AG04449 (cell line): ENCODE measurements at regions of chr19 and their contacts with region 1.

Region 1: DNA sequence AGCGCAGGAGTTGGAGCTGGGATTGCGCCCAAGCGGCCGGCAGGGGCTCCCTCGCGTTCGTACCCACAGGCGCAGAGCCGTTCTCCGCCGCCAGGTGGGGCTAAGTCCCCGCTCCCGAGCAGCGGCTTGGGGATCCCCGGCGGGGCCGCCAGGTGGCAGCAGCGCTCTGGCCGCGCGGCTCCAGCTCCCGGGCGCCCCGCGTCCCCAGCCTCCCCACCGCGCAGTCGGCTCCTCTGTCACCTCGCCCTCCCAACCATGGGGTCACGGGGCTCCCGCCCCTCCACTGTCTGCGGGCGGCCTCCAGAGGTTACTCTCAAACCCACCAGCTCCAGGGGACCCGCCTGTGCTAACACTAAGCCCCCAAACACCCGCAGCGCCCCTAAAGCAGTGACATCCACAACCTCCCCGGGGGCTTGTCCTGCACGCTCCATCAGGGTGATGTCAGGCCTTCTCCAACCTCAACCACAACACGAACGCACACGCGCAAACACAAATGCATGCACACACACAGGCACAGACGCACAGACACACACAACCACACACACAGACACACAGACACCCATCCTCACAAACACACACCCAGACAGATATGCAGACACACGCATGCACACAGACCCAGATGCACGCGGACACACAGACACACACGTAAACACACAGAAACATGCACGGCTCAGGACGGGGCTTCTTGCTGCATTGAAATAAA is 18.4 kb upstream of the KCTD15 start:
- DNase-seq: no peak
- H3K4me3 ChIP-seq: no peak overlapping the region
- CTCF ChIP-seq: peak; percentile 99

Region 2: DNA sequence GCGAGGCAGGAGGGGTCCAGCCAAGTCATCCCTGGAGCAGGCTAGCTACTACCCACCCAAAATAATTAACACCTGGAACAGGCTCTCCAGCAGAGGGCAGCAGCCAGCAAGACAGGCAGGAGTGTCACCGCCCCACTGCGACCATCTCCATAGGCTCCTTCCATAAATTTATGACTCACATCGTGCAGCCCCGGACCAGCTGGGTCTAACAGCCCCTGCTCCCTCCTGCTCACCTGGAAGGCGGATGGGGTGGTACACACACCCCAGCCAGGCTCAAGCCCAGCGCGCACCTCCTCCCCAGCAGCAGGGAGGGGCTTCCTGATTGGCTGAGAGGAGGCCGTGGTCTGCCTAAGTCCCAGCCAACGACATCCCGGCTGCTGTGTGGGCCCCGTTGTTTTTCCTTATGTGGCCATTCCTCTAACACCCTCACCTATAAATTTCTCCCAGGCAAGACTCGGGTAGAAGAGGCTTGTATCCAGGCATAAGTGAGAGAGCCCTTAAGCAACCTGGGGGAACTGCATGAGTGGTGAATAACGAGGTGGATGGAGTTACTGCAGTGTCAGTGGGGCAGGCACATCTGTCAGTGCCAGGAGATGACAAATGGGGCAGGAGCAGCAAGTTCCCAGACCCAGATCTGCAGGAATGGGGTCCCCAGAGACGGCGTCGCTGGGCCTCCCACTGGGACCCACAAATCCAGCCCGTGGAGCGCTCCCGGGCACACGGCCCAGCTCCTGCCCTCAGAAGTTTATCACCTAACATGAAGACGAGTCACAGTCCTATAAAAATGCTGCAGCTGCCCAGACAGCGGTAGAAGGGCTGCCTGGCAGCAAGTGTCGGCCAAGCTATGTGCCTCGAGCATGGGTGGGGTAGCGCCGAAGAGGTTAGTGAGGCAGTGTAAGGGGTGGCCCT is 361.7 kb before region 1 on chr19:
- CTCF ChIA-PET with region 1: interaction called, 170 read pairs
- POLR2A ChIA-PET with region 1: no interaction called
- DNase-seq: no peak
- H3K4me3 ChIP-seq: peak overlapping the region; percentile 12; the same call in 1 of the 2 replicates
- CTCF ChIP-seq: peak; percentile 74

Region 3: GRCh38 chr19:33720691-33721682 is 57.3 kb before region 1 on chr19:
- CTCF ChIA-PET with region 1: no interaction called
- POLR2A ChIA-PET with region 1: no interaction called
- DNase-seq: no peak
- H3K4me3 ChIP-seq: no peak overlapping the region
- CTCF ChIP-seq: no peak

Region 4: DNA sequence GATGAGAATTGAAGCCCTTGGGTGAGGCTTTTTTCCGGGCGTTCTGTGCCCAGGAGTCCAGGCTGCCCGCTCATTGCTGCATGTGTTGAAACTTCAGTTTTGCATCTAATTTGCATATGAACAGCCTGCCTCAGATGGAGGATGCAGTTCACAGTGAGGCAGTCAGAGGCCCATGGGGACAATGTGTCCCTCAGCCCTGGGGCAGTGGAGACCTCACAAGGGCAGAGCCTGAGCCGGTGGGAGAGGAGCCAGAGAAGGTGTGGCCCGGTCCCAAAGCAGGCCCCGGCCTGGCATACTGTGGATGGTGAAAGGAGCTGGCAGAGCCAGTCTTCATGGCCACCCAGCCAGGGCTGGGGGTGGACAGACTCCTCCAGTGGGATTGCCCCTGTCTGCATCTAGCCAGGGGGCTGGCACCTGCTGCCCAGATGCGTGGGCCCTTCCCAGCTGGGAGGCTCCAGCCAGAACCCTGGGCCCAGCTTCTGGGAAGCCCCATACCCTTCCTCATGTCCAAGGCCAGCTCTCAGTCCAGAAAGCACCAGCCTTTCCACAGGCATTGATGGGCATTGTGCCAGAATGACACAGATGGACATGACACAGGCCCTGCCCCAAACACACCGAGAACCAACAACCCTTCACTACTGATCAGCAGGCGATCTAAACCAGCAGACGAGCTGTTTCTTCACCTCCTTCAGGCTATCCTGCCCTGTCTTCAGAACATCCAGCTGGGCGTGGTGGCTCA is 14.4 kb before region 1 on chr19:
- CTCF ChIA-PET with region 1: interaction called, 22 read pairs
- POLR2A ChIA-PET with region 1: no interaction called
- DNase-seq: no peak
- H3K4me3 ChIP-seq: no peak overlapping the region
- CTCF ChIP-seq: no peak

Region 5: DNA sequence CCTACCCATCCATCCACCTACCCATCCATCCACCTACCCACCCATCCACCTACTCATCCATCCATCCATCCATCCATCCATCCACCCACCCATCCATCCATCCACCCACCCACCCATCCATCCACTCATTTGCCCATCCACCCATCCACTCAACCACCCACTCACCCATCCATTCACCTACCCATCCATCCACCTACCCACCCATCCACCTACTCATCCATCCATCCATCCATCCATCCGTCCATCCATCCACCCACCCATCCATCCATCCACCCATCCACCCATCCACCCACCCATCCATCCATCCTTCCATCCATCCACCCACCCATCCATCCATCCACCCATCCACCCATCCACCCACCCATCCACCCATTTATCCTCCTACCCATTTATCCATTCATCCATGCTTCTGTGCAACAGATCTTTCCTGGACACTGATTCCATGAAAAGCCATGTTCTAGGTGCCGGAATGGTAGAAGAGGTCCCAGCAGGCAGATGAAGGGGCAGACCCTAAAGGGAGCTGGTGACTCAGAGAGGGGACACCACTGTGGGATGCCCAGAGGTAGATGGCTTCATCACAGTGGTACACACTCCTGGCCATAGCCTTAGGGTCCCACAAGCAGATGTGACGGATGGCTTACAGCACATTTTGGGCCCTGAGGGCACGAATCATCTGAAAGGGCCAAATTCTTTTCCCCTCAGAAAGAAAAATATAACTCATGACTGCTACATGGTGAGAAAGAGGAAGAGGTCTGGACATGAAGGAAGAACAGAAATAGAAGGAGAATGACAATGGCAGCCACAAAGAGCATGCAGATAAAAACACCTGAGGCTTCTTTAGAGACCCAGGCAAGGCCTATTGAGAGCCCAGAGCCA is 94.4 kb after region 1 on chr19:
- CTCF ChIA-PET with region 1: no interaction called
- POLR2A ChIA-PET with region 1: no interaction called
- DNase-seq: no peak
- H3K4me3 ChIP-seq: no peak overlapping the region
- CTCF ChIP-seq: no peak

Region 6: DNA sequence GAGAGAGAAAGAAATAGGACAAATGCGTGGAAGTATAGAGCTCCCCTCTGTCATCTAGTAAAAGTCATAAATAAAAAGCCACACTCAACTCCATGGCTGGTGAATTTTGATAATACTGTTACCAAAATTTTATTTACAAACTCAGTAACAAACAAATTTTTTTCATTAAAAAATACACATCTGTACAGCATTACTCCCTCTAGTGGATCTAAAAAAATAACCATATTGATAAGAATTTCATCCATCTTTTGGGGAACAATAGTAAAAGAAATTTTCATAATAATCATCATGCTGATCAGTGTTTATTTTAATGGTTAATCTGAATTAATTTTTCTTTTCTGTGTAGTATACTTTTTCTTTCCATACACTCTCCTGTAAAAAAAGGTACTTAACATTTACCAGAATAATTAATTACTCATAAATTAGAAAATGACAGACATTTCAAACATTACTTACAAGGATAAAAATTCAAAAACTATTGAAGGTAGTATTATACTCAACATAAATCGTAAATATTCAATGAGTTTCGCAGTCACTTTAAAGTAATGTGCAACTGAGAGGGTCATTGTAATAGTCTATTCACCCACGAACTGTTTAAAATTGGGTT is 220.6 kb after region 1 on chr19:
- CTCF ChIA-PET with region 1: interaction called, 123 read pairs
- POLR2A ChIA-PET with region 1: no interaction called
- DNase-seq: no peak
- H3K4me3 ChIP-seq: no peak overlapping the region
- CTCF ChIP-seq: no peak

Region 7: DNA sequence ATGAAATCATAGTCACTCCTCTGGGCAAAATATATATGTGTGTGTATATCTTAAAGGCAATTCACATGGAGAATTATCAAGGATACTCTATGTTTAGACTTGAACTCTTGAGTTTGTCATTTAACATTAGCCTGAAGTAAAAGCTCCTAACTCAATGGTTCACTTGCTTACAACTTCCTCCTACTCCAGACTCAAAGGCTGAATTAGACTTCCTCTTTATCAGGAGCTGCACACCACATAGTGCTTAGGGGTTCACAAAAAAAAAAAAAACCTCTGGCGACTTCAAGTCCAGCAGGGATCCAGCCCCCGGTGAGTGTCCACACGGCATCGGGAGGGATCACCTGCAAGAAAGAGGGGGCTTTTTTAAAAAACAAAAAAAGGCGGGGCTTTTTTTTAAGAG is 325.9 kb after region 1 on chr19:
- CTCF ChIA-PET with region 1: interaction called, 20 read pairs
- POLR2A ChIA-PET with region 1: no interaction called
- DNase-seq: no peak
- H3K4me3 ChIP-seq: no peak overlapping the region
- CTCF ChIP-seq: no peak